ENCODE measurements at regions of chr6 and their contacts with region 1.

Region 1: GRCh38 chr6:106339334-106340029 is 13.9 kb upstream of the ATG5 start:
- DNase-seq: no peak
- ATAC-seq: peak; percentile 50

Region 2: GRCh38 chr6:106290954-106291353 is 48.5 kb before region 1 on chr6:
- intact Hi-C with region 1: loop called (anchors 2 kb)
- DNase-seq: no peak
- ATAC-seq: no peak

Region 3: DNA sequence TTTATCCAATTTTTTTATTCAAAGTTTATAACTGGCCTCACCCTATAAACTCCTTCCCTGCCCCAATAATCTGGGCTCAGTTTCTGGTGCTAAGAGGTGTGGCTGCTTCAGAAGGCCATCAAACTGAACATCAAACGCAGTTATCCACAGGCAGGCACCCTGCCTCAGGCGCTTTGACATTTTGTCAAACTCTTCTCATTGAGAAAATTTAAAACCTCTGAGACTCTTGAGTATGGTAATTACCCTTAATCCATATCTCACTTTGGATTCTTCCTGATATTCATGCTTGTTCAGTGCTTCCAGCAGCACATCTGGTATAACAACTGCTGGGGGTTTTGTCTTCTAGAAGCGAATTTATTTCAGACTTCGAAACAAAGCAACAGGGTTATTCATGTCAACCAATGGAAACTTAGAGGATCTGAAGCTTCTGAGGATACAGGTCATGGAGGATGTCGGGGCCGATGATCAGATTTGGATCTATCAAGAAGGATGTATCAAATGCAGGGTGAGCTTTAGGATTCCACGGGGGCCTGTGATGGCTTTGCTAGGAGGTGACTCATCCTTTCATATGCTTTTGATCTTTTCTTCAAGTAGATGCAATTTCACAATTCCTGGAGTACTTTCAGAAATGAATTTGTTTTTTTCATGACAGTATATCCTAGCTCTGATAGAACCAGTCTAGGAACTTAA is 221.7 kb after region 1 on chr6:
- intact Hi-C with region 1: loop called (anchors 10 kb)
- DNase-seq: no peak
- ATAC-seq: peak; percentile 28